ENCODE measurements at regions of chr1 and their contacts with region 1.

Region 1: DNA sequence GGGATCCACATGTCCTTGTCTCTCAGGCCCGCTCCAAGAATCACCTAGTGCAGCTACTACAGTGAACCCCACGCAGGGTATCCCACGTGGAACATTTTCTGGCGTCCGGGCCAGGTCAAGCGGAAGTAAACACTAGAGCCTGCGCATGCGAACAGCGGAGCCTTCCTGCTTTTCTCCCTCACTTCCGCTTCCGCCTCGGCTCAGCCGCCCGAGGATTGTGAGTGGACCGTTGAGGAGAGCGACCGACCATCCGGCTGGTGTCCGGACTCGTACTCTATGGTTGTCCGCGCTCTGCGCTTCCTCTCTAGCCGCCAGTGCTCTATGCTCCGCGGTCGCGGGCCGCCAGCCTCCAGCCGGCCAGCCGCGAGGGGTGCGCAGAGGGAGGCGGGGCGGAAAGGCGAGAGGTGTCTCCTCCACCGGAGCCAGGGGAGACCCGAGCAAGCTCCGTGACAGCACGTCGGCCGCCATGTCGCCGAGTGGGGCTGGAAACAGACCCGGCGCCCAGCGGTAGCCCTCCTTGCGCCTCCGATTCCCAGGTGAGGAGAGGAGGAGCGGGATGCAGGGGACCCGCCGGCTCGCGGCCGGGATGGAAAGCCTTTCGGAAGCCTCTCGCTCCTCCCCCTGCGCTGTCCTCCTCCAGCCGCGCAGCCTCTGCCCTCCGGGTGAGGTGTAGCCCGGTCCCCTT is at the starts of genes CNST and TFB2M:
- DNase-seq: peak; percentile 98
- ATAC-seq: peak; percentile 99
- total RNA-seq, gene CNST: 18.4 TPM
- total RNA-seq, gene TFB2M: 18.0 TPM

Region 2: DNA sequence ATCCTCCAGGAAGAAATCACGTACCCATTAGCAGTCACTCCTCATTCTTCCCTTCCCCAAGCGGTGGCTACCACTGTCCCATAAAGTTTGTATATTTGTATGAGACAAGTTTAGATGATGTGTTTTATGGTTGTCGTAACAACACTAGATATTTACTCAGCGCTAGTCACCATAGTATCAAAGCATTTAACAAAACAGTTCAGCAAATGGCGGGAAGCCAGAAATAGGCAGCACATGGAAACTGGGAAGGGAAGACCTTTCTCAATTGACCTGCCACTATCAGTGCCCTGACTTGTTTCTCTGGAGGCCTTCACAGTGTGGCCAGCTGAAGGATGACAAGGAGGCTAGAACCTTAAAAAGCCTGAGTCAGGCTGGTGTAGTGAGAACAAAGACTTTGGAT is 31.1 kb after region 1 on chr1:
- intact Hi-C with region 1: loop called (anchors 2 kb)
- DNase-seq: no peak
- ATAC-seq: peak; percentile 90

Region 3: DNA sequence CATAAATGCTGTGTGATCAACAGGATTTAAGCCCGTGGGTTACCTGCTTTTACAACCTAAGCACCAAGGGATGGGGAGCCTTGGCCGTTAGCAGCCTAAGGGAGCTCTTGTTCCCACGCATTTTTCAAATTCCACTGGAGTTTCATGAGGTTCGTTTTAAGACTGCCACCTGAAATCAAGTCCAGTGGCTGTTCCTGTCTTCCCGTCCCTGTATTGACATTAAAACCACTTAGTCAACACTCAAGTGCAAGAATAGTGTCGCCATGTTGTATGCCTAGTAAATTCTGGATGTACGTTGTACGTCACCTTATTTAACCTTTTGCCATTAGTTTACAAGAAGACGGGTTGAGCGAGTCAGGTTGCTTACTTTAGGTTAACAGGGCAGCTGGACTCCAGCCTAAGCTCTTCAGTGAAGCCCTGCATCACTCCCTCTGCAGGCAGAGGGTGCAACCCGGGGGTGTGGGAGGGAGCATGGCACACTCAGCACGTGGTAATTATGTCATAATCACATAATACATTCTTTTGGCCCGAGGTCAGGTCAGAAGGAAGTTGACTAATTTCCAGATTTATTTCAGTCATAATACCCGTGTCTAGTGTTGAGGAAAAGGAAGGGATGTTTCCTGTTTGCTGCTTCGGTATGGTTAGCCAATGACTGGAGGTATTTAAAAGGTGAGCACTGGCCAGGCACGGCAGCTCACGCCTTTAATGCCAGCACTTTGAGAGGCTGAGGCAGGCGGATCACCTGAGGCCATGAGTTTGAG is 42.5 kb after region 1 on chr1:
- intact Hi-C with region 1: loop called (anchors 2 kb)
- DNase-seq: no peak
- ATAC-seq: peak; percentile 87

Region 4: GRCh38 chr1:246641394-246641793 is 75.1 kb after region 1 on chr1:
- intact Hi-C with region 1: loop called (anchors 2 kb)
- DNase-seq: no peak
- ATAC-seq: no peak

Region 5: GRCh38 chr1:246699095-246699735 is 132.9 kb after region 1 on chr1:
- intact Hi-C with region 1: loop called (anchors 2 kb)
- DNase-seq: peak; percentile 88
- ATAC-seq: peak; percentile 94